ENCODE measurements at regions of chr3 and their contacts with region 1.

Region 1: GRCh38 chr3:191762323-191762960 is 301.5 kb downstream of the PYDC2 start:
- DNase-seq: no peak
- H3K4me3 ChIP-seq: no peak overlapping the region
- H3K27ac ChIP-seq: peak overlapping the region; percentile 21; the same call in 1 of the 2 replicates
- H3K4me1 ChIP-seq: peaks cover 10% of the 10 kb centered on the region
- H3K27me3 ChIP-seq: no peaks in the 10 kb centered on the region
- CTCF ChIP-seq: no peak

Region 2: GRCh38 chr3:191743283-191743682 is 19.2 kb before region 1 on chr3:
- CTCF ChIA-PET with region 1: no interaction called
- POLR2A ChIA-PET with region 1: no interaction called
- intact Hi-C with region 1: no loop called
- DNase-seq: no peak
- H3K4me3 ChIP-seq: no peak overlapping the region
- H3K27ac ChIP-seq: no peak overlapping the region
- H3K4me1 ChIP-seq: no peaks in the 10 kb centered on the region
- H3K27me3 ChIP-seq: no peaks in the 10 kb centered on the region
- CTCF ChIP-seq: no peak

Region 3: DNA sequence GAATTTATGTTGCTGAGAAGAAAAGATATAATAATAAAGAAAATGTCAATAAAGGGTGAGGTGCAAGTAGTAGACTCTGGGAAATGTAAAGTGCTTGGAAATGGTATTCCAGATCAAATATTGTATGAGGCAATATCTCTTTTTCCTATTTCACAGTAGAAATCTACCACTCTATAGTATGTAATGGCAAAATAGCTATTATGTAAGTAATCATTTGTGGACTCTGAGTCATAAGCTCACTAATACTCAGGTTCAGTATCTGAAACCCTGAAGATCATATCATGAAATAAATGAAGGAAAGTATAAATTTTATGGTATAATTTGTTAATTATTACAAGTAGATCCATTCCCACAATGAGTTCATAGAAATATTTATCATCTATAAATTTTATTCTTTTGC is 20.6 kb after region 1 on chr3:
- CTCF ChIA-PET with region 1: no interaction called
- POLR2A ChIA-PET with region 1: no interaction called
- intact Hi-C with region 1: loop called (anchors 1 kb)
- DNase-seq: no peak
- H3K4me3 ChIP-seq: no peak overlapping the region
- H3K27ac ChIP-seq: no peak overlapping the region
- H3K4me1 ChIP-seq: no peaks in the 10 kb centered on the region
- H3K27me3 ChIP-seq: no peaks in the 10 kb centered on the region
- CTCF ChIP-seq: no peak

Measured in PC-9 (cell line).